ENCODE measurements at regions of chr1 and their contacts with region 1.

Region 1: GRCh38 chr1:225977937-225978748 is 21.0 kb downstream of the SDE2 start:
- DNase-seq: no peak
- ATAC-seq: no peak

Region 2: DNA sequence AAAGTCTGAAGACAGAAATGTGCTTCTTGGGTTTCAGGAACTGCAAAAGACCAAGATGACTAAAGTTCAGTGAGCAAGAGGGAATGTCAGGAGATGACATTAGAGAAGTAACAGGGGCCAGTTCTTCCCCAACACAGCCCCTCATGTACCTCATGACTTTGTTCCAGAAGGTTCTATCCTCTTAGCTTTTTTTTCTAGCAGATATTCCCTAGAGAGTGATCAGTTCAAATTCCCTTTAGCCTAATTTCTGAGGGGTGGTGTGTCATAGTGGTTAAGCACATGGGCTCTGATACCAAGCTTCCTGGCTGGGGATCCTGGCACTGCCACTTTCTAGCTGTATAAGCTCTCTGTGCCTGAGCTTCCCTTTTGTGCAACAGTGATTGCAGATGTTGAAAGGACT is 658.3 kb before region 1 on chr1:
- intact Hi-C with region 1: loop called (anchors 5 to 10 kb)
- DNase-seq: no peak
- ATAC-seq: no peak